Calu3 (cell line): ENCODE measurements at regions of chr1 and their contacts with region 1.

Region 1: GRCh38 chr1:223738465-223739365 is 26.4 kb downstream of the CAPN2 start:
- DNase-seq: peak; percentile 77
- H3K4me3 Mint-ChIP-seq: peak overlapping the region; percentile 62
- H3K27ac Mint-ChIP-seq: peak overlapping the region; percentile 95
- H3K4me1 Mint-ChIP-seq: peaks cover 68% of the 10 kb centered on the region
- H3K27me3 Mint-ChIP-seq: no peaks in the 10 kb centered on the region
- CTCF ChIP-seq: no peak

Region 2: DNA sequence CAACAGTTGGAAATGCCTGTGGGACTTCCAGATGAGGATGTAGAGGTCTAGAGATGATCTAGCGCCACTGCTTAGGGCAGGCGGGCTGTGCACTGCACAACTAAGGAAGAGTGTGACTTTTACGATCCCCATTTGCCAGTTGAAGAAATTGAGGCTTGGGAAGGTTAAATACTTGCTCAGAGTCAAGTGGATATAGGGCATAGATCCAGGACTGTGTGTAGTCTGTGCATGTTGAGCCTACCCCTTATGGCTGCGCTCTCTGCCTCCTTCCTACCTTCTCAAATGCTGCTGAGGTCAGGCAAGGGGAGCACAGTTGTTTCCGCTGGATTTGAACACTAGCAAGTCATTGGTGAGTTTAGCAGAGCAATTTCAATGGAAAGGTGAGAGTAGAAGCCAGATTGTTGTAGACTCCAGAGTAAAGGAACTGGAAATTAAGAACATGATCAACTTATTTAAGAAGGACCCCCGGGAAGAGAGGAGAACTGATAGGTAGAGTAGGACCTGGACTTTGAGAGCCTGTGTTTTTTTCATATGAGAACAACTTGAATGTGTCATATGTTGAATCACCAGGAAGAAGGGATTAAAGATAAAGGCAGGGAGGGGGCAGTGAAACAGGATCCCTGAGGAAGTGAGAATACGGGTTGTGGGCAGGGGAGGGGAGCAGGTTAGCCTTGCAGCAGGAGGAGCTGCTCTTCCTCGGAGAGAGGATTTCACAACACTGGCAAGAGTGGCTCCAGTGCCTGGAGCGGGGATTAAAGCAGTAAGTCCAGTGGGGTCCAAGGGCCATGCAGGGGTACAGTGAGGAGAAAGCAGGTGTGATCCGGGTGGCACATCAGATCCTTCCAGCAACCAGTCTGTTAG is 23.6 kb before region 1 on chr1:
- CTCF ChIA-PET with region 1: interaction called, 9 read pairs
- intact Hi-C with region 1: loop called (anchors 2 kb)
- DNase-seq: peak; percentile 89
- H3K4me3 Mint-ChIP-seq: peak overlapping the region; percentile 80
- H3K27ac Mint-ChIP-seq: peak overlapping the region; percentile 94
- H3K4me1 Mint-ChIP-seq: peaks cover 73% of the 10 kb centered on the region
- H3K27me3 Mint-ChIP-seq: no peaks in the 10 kb centered on the region
- CTCF ChIP-seq: no peak

Region 3: DNA sequence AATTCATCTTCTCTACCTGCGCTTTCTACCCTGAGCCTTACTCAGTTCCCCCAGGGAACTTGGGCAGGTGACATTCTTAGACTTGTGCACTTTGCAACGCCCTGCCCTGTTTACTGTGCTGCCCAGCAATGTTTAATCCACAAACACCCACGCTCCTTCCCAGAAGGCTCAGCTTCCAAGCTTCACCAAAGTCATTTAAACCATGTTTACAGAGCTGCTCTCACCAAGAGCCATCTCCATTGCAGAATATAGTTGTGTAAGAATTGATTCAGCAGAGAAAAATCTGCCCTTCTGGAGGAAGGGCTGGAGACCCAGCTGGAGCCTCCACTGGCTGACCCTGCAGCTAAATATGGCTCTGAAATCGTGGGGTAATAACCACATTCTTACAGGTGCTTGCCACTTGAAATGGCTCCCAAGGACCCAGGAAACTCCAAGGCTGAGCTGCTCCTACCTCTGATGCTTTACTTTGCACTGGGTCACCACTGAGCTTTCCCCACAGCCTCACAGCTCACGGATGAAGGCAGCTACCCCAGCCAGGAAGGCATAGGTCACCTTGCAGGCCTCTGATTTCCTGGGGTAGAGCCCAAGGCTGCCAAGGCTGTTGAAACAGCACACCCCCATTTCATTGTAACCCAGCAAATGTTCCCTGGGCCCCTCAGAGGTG is 17.7 kb before region 1 on chr1:
- CTCF ChIA-PET with region 1: interaction called, 10 read pairs
- intact Hi-C with region 1: no loop called
- DNase-seq: peak; percentile 68
- H3K4me3 Mint-ChIP-seq: peak overlapping the region; percentile 11
- H3K27ac Mint-ChIP-seq: peak overlapping the region; percentile 55
- H3K4me1 Mint-ChIP-seq: peaks cover 83% of the 10 kb centered on the region
- H3K27me3 Mint-ChIP-seq: no peaks in the 10 kb centered on the region
- CTCF ChIP-seq: no peak